ENCODE measurements at regions of chr18 and their contacts with region 1.

Region 1: GRCh38 chr18:3869848-3870247 is 419.9 kb downstream of the TGIF1 start:
- DNase-seq: peak; percentile 90
- H3K4me3 ChIP-seq: peak overlapping the region; percentile 10
- H3K27ac ChIP-seq: peak overlapping the region; percentile 88
- H3K4me1 ChIP-seq: peaks cover 74% of the 10 kb centered on the region
- H3K27me3 ChIP-seq: no peaks in the 10 kb centered on the region
- CTCF ChIP-seq: peak; percentile 72

Region 2: GRCh38 chr18:3360211-3360610 is 509.6 kb before region 1 on chr18:
- CTCF ChIA-PET with region 1: no interaction called
- POLR2A ChIA-PET with region 1: no interaction called
- intact Hi-C with region 1: no loop called
- DNase-seq: no peak
- H3K4me3 ChIP-seq: no peak overlapping the region
- H3K27ac ChIP-seq: no peak overlapping the region
- H3K4me1 ChIP-seq: no peaks in the 10 kb centered on the region
- H3K27me3 ChIP-seq: no peaks in the 10 kb centered on the region
- CTCF ChIP-seq: no peak

Region 3: GRCh38 chr18:3454365-3455089 is 415.3 kb before region 1 on chr18:
- CTCF ChIA-PET with region 1: no interaction called
- POLR2A ChIA-PET with region 1: no interaction called
- intact Hi-C with region 1: loop called (anchors 2 kb)
- DNase-seq: peak; percentile 87
- H3K4me3 ChIP-seq: peak overlapping the region; percentile 91
- H3K27ac ChIP-seq: peak overlapping the region; percentile 96
- H3K4me1 ChIP-seq: peaks cover 38% of the 10 kb centered on the region
- H3K27me3 ChIP-seq: no peaks in the 10 kb centered on the region
- CTCF ChIP-seq: peak; percentile 78

Region 4: GRCh38 chr18:3771121-3771971 is 98.5 kb before region 1 on chr18:
- CTCF ChIA-PET with region 1: interaction called, 13 read pairs
- POLR2A ChIA-PET with region 1: no interaction called
- intact Hi-C with region 1: loop called (anchors 2 kb)
- DNase-seq: peak; percentile 95
- H3K4me3 ChIP-seq: peak overlapping the region; percentile 14
- H3K27ac ChIP-seq: peak overlapping the region; percentile 77
- H3K4me1 ChIP-seq: peaks cover 53% of the 10 kb centered on the region
- H3K27me3 ChIP-seq: no peaks in the 10 kb centered on the region
- CTCF ChIP-seq: peak; percentile 98

Region 5: GRCh38 chr18:3845161-3845560 is 24.7 kb before region 1 on chr18:
- CTCF ChIA-PET with region 1: interaction called, 11 read pairs
- POLR2A ChIA-PET with region 1: interaction called, 3 read pairs
- intact Hi-C with region 1: no loop called
- DNase-seq: peak; percentile 62
- H3K4me3 ChIP-seq: peak overlapping the region; percentile 54
- H3K27ac ChIP-seq: peak overlapping the region; percentile 98
- H3K4me1 ChIP-seq: peaks cover 62% of the 10 kb centered on the region
- H3K27me3 ChIP-seq: no peaks in the 10 kb centered on the region
- CTCF ChIP-seq: no peak

Region 6: GRCh38 chr18:4068552-4069158 is 198.8 kb after region 1 on chr18:
- CTCF ChIA-PET with region 1: no interaction called
- POLR2A ChIA-PET with region 1: no interaction called
- intact Hi-C with region 1: loop called (anchors 5 kb)
- DNase-seq: peak; percentile 73
- H3K4me3 ChIP-seq: no peak overlapping the region
- H3K27ac ChIP-seq: peak overlapping the region; percentile 21
- H3K4me1 ChIP-seq: no peaks in the 10 kb centered on the region
- H3K27me3 ChIP-seq: no peaks in the 10 kb centered on the region
- CTCF ChIP-seq: peak; percentile 82